Activated naive CD4-positive, alpha-beta T cell treated with anti-CD3 and anti-CD28 coated beads for 36 hours (primary cell): ENCODE measurements at regions of chrX and their contacts with region 1.

Region 1: GRCh38 chrX:130079824-130080406 is 30.4 kb downstream of the ELF4 start:
- DNase-seq: peak; percentile 74
- H3K4me3 Mint-ChIP-seq: no peak overlapping the region
- H3K27ac Mint-ChIP-seq: peak overlapping the region; percentile 4
- H3K4me1 Mint-ChIP-seq: peaks cover 41% of the 10 kb centered on the region
- H3K27me3 Mint-ChIP-seq: no peaks in the 10 kb centered on the region

Region 2: GRCh38 chrX:129769467-129770353 is 310.2 kb before region 1 on chrX:
- CTCF ChIA-PET with region 1: no interaction called
- intact Hi-C with region 1: no loop called
- DNase-seq: peak; percentile 68
- H3K4me3 Mint-ChIP-seq: no peak overlapping the region
- H3K27ac Mint-ChIP-seq: peak overlapping the region; percentile 77
- H3K4me1 Mint-ChIP-seq: peaks cover 62% of the 10 kb centered on the region
- H3K27me3 Mint-ChIP-seq: no peaks in the 10 kb centered on the region

Region 3: DNA sequence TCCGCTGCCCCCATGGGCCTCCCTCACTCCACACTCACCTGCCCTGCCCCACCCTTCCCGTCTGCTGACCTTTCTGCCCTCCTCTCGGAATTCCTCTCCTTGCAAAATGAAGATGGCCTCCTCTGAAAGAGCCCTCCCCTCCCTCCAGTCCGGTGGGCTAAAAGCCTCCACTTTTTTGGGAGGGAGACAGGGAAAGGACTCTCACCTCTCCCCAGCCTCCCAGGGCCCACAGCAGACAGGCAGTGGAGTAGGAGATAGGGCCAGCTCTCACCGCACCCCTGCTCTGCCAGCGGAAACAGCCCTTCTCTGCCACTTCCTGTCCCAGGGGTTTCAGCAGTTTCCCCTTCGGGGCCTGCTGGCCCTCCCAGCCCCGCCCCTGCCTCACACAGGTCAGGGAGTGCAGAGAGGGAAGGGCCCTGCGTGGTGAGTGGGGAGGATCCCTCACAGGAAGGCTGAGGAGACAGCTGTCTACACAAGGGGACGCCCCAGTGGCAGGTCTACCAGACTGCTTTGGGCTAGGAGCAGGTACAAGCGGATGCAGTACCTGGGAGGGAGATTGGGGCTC is 12.1 kb after region 1 on chrX:
- CTCF ChIA-PET with region 1: interaction called, 12 read pairs
- intact Hi-C with region 1: loop called (anchors 1 kb)
- DNase-seq: peak; percentile 94
- H3K4me3 Mint-ChIP-seq: peak overlapping the region; percentile 80
- H3K27ac Mint-ChIP-seq: peak overlapping the region; percentile 96
- H3K4me1 Mint-ChIP-seq: peaks cover 58% of the 10 kb centered on the region
- H3K27me3 Mint-ChIP-seq: no peaks in the 10 kb centered on the region

Region 4: DNA sequence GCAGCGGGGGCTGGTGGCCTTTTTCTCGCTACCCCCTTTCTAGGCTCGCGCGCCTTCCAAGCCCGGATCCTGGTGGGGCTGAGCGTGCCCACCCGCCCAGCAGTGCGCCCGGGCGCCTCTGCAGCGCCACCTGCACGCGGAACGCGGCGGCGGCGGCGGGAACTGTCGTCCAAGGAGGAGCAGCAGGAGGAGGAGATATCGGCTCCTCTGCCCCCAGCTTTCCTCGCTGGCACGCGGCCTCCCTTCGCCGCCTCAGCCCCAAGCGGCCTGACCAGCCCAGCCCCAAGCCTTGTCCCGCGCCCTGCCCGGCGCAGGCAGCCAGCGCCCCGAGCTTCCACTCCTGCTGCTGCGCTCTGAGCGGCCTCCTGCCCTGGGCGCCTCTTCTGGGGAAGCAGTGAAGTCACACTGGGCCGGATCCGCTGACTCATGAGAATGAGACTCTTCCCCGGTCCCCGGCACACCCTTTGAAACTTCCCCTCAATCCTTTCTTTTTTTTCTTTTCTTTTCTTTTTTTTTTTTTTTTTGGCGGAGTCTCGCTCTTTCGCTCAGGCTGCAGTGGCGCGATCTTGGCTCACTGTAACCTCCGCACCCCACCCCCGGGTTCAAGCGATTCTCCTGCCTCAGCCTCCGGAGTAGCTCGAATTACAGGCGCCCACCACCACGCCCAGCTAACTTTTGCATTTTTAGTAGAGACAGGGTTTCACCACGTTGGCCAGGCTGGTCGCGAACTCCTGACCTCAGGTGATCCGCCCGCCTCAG is 41.0 kb after region 1 on chrX:
- CTCF ChIA-PET with region 1: interaction called, 74 read pairs
- intact Hi-C with region 1: loop called (anchors 1 kb)
- DNase-seq: peak; percentile 77
- H3K4me3 Mint-ChIP-seq: peak overlapping the region; percentile 61
- H3K27ac Mint-ChIP-seq: no peak overlapping the region
- H3K4me1 Mint-ChIP-seq: peaks cover 15% of the 10 kb centered on the region
- H3K27me3 Mint-ChIP-seq: no peaks in the 10 kb centered on the region

Region 5: DNA sequence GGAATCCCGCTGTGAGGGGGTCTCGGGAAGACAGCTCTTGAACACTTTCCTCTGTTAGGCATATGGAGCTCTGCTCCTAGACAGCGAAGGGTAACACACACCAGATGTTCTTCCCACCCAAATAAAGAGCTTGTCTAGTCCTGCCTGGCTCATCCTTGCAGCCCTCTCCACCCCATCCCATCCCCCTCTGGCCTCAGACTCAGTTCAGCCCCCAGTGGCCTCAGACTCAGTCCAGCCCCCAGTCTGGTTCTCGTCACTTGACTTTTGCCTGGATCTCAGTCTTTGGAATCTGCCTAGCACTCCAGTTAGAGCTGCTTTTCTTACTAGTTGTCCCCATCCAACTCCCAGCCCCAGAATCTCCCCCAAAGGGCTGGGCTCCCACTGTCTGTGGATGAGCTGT is 106.7 kb after region 1 on chrX:
- CTCF ChIA-PET with region 1: interaction called, 99 read pairs
- intact Hi-C with region 1: no loop called
- DNase-seq: no peak
- H3K4me3 Mint-ChIP-seq: no peak overlapping the region
- H3K27ac Mint-ChIP-seq: no peak overlapping the region
- H3K4me1 Mint-ChIP-seq: peaks cover 21% of the 10 kb centered on the region
- H3K27me3 Mint-ChIP-seq: no peaks in the 10 kb centered on the region

Region 6: DNA sequence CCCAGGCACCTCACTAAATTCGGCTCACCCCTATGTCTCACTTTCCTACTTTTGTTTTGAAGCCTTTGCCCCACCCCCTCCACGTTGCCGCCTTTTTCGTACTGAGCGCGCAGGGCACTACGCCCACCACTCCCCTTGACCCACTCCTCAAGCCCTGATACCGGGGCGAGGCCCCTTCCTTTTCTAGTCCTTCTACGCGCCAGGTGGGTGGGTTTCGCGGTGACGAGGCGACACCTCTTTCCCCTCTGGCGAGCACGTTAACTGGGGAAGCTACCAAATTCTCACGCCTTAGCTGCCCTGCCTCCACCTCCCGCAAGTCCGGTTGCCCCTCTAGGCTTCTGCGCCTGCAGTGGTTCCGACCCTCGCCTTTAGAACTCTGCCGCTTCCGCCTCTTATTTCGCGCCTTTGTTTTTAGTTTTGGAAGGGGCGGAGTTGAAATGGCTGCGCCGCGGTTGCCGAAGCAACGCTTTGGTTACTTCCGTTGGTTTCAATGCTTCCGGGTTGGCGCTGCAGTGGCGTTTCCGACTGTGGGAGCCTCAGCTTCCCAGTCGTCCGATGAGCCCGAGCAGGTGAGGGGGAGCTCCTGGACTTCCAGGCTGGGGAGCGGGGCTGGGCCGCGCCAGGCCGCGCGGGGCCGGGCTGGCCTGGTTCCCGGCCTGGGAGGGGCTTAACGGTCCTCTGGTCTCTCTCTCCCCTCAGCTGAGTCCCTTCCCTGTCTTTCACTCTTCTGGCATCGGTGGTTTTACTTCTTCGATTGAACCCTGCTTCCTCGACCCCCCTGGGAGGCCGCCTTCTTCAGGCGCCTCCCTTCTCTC is 259.7 kb after region 1 on chrX and contains the start of gene SLC25A14:
- CTCF ChIA-PET with region 1: no interaction called
- intact Hi-C with region 1: loop called (anchors 10 kb)
- DNase-seq: peak; percentile 82
- H3K4me3 Mint-ChIP-seq: peak within 1 kb of the TSS; percentile 86
- H3K27ac Mint-ChIP-seq: peak within 1 kb of the TSS; percentile 89
- H3K4me1 Mint-ChIP-seq: peaks cover 13% of the 10 kb centered on the region
- H3K27me3 Mint-ChIP-seq: no peaks in the 10 kb centered on the region
- total RNA-seq, gene SLC25A14: 7.4 to 9.0 TPM

Region 7: DNA sequence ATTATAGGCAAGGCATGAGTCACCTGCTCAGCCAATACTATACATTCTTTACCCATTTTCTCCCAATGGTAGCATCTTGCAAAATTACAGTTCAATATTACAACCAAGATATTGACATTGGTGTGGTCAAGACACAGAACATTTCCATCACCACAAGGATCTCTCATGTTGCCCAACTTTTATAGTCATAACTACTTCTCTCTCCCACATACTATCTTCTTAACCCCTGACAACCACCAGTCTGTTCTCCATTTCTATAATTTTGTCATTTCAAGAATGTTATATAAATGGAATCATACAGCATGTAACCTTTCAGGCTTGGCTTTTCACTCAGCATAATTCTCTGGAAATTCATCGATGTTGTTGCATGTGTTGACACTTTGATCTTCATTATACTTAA is 678.2 kb after region 1 on chrX:
- CTCF ChIA-PET with region 1: no interaction called
- intact Hi-C with region 1: no loop called
- DNase-seq: no peak
- H3K4me3 Mint-ChIP-seq: no peak overlapping the region
- H3K27ac Mint-ChIP-seq: no peak overlapping the region
- H3K4me1 Mint-ChIP-seq: no peaks in the 10 kb centered on the region
- H3K27me3 Mint-ChIP-seq: no peaks in the 10 kb centered on the region